ENCODE measurements at regions of chr2 and their contacts with region 1.

Region 1: DNA sequence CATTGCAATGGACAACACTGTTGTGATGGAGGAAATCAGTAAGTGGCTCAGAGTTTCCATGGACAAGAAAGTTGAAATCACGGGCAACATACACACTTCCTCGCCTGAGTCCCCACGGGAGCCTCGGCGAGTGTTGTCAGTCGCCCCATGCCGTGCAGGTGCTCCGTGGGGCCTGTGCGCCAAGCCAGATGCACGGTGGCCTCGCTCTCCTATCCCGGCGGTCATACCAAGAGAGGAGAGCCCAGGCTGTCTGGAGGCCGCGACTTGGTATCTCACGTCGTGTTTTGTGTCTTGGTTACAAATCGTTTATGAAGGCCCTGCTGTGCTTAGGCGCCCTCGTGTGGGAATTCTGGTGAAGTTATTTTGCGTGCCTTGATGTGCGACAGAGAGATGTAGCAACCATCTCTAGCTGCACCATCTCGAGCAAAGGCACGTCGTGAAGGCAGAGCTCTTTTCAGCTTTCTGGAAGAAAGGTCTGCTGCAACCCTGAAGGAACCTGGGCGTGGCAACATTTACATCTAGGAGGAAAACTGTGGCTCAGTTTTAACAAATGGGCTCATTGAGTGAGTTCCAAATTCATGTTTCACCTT is 21.8 kb downstream of the ATG4B start:
- DNase-seq: peak; percentile 72
- H3K4me3 ChIP-seq: no peak overlapping the region
- H3K27ac ChIP-seq: no peak overlapping the region
- H3K4me1 ChIP-seq: no peaks in the 10 kb centered on the region
- H3K27me3 ChIP-seq: no peaks in the 10 kb centered on the region
- CTCF ChIP-seq: peak; percentile 66
- EP300 ChIP-seq: no peak
- RAD21 ChIP-seq: peak; percentile 81

Region 2: DNA sequence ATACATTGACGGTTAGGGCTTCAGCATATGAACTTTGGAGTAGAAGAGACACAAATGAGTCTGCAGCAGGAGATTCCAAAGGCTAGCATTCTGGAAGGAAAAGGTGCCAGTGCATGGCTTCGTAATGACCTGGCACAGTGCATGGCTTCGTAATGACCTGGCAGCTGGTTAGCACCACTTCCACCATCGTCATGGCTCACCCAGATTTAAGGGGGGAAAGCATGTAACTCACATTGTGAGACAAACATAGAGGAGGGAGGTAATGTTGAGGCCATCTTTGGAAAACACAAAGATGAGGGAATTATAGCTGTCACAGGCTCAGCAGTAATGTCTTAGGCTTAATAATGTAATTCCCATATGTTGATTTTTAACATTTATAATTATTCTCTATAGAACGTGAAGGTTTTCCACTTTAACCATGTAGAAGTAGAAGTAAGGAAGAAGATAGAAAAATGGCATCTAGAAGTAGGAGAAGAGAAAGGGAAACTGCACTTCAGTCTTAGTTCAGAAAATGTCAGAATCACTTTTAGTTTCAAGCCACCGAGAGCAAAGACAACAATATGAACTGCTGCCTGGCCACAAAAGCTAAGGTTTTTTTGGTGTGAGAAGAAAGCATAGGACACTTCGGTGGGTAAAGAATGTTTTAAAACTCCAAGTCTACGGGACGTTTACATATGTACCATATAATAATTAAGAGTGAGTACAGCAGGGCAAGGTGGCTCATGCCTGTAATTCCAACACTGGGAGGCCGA is 144.1 kb before region 1 on chr2:
- CTCF ChIA-PET with region 1: no interaction called
- POLR2A ChIA-PET with region 1: no interaction called
- DNase-seq: no peak
- H3K4me3 ChIP-seq: no peak overlapping the region
- H3K27ac ChIP-seq: no peak overlapping the region
- H3K4me1 ChIP-seq: no peaks in the 10 kb centered on the region
- H3K27me3 ChIP-seq: no peaks in the 10 kb centered on the region
- CTCF ChIP-seq: no peak
- EP300 ChIP-seq: no peak
- RAD21 ChIP-seq: no peak

Region 3: DNA sequence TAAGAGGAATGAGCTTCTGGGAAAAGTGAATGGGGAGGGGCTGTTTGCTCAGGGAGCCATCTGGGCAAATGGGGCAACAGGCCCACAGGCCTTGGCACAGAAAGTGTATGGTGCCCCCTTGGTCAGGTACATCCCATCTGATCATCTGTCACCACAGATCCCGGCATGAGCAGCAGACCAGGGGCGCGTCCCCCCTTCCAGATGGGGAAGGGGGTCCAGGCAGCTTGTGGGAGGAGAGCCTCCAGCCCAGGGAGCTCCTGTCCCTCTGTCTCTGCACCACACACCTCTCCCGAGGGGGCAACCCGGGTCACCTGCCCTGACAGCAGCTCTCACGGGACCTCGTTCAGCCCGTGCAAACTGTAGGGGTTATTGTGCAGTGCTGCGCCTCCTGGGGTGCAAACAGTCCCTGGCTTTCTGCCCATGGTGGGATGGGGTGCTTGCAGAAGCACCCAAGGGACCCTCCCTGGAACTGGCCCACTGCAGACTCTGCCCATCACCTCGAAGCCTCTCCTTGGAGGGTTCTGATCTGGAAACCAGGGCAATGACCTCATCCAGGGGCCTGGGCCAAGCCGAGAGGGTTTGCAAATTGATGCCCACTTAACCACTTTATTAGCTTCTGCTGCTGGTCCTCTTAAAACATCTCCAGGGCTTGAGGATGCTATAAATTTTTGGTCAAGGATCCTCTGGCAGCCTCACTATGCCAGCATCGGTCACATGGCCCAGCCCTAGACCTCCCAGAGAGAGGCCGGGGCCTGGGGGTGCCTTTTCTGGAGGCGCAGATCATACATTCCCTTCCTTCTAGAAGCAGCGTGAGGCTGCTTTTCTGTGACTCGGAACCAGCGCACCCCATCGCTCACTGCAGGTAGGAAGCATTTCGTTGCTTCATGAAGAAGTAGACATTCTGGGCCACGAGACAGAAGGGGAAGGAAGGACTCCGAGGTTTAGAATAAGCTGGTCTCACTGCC is 108.3 kb before region 1 on chr2:
- CTCF ChIA-PET with region 1: interaction called, 15 read pairs
- POLR2A ChIA-PET with region 1: no interaction called
- DNase-seq: no peak
- H3K4me3 ChIP-seq: no peak overlapping the region
- H3K27ac ChIP-seq: no peak overlapping the region
- H3K4me1 ChIP-seq: peaks cover 3 to 4% of the 10 kb centered on the region in 2 experiments; a peak in 2 of 4 replicates
- H3K27me3 ChIP-seq: no peaks in the 10 kb centered on the region
- CTCF ChIP-seq: no peak
- EP300 ChIP-seq: no peak
- RAD21 ChIP-seq: no peak

Region 4: DNA sequence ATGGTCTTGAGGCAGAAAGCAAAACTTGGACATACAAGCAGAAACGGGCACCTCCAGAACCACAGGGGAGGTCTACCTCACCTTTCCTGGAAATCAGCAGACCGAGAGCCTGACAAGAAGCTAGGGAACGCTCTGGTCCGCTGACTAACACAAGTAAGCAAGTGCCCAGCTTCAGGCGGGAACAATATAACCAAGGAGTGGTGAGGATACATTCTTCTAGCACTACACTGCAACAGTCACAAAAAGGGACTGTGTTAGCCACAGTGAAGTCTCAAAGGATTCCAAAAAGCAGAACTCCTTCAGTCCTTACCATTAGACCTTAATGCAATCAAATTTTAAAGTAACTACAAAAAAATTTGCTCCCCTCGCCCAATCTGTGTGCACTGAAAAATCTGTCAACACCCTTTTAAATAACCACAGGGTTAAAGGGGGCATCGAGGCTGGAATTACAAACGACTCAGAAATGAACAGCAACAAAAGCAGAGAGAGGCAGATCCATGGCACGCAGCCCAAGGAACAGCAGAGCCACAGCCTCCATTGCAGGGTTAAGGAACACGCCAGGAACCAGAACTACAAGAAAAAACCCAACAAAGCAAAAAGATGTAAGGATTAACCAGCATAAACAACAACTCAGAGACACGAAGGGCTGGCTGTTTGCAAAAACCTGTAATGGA is 29.3 kb before region 1 on chr2:
- CTCF ChIA-PET with region 1: interaction called, 10 read pairs
- POLR2A ChIA-PET with region 1: no interaction called
- DNase-seq: no peak
- H3K4me3 ChIP-seq: no peak overlapping the region
- H3K27ac ChIP-seq: no peak overlapping the region
- H3K4me1 ChIP-seq: peaks cover 0 to 3% of the 10 kb centered on the region in 2 experiments; a peak in 2 of 4 replicates
- H3K27me3 ChIP-seq: no peaks in the 10 kb centered on the region
- CTCF ChIP-seq: no peak
- EP300 ChIP-seq: no peak
- RAD21 ChIP-seq: no peak

Region 5: DNA sequence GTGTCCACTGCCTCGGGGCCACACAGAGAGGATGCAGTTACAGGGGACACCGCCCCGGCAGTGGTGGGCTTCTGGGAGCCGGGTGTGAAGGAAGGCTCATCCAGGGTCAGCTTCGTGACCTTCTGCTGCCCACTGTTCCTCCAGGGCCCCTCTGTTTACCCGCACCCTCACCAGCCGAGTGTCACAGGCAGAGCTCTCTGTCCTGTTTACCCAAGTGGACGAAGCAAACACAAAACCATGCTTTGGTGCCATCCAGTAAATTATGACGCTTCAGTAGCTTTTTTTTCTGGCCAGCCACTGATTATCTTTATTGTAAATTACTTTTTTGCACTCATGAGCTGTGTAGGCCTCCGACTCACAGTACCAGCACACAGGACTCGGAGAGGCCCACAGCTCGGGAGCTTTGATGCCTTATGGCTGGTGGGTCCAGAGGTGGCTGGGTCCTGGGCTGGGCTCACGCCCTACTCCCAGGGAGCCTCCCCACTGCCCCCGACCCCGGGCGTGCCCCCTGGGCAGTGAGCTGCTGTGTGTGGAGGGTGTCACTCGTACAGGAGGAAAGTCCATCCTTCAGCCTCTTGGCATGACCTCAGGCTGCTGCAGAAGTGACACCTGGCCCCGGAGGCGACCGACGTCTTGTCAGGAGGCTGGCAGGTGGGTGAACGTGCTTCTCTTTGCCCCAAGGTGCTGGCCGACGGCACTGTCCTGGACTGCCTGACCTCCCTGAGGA is 84.9 kb after region 1 on chr2:
- CTCF ChIA-PET with region 1: no interaction called
- POLR2A ChIA-PET with region 1: no interaction called
- DNase-seq: no peak
- H3K4me3 ChIP-seq: no peak overlapping the region
- H3K27ac ChIP-seq: no peak overlapping the region
- H3K4me1 ChIP-seq: peaks cover 0 to 2% of the 10 kb centered on the region in 2 experiments; a peak in 1 of 4 replicates
- H3K27me3 ChIP-seq: no peaks in the 10 kb centered on the region
- CTCF ChIP-seq: no peak
- EP300 ChIP-seq: no peak
- RAD21 ChIP-seq: no peak

Region 6: DNA sequence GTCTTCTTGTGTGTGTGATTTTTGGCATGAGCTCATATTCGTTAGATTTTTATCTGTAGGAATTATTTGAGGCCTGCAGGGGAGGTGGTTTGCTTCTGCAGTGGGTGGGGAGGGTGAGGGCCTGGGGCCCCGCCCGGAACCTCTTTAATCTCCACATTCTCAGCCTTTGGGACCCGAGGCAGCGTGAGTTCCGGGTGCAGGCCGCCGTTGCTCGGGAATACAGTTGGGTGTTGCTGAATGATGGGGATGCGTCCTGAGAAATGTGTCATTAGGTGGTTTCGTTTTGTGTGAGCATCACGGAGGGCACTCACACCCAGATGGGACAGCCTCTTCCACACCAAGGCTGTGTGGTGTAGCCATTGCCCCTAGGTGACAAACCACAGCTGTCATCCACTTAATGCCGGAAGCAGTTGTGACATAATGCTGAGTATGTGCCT is 103.7 kb after region 1 on chr2:
- CTCF ChIA-PET with region 1: no interaction called
- POLR2A ChIA-PET with region 1: no interaction called
- DNase-seq: peak; percentile 45
- H3K4me3 ChIP-seq: no peak overlapping the region
- H3K27ac ChIP-seq: peak overlapping the region in 1 of 2 experiments; percentile 53; a peak in 2 of 4 replicates
- H3K4me1 ChIP-seq: peaks cover 0 to 32% of the 10 kb centered on the region in 2 experiments; a peak in 1 of 4 replicates
- H3K27me3 ChIP-seq: no peaks in the 10 kb centered on the region
- CTCF ChIP-seq: no peak
- EP300 ChIP-seq: no peak
- RAD21 ChIP-seq: no peak

Measured in SK-N-SH (cell line).